Heart right ventricle (tissue), 16 donors: ENCODE measurements at regions of chr6 and their contacts with region 1.

Region 1: DNA sequence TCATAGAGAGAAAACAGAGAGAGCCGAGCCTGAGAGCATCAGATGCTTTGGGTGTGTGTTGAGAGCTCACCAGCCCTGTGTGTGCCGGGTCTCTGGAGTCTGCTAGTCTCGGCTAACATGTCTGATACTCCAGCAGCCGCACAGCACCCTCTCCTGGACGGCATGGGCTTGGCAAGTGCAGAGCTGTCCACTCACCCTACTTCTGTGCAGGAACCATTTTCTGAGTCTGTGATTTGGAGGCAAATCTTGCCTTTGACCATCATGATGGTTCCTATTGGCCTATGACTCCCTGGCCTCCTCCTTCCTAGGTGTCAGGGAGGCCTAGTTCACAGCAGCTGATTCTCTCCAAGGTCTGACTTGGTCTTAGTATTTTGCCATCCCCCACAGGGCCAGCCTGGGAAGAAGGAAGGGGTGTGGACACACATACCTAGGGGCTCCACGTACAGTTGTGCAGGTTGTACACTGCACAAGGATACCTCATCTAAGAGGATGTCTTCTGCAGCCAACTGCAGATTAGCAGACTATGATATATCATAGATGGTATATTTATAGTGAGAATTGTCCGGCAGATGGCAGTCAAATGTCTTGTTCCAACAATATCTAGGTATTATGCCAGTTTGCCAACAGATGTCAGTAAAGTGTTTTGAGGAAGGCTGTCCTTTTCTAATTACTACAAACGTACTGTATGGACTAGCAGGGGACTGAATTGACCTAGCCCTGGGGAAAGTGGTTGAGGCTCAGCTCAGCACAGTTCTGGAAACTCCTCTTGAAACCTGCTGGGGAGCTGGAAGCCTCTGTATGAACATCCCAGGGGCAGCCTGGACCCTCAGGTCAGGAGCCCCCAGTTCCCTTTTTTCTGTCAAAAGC is 13.0 kb downstream of the FGD2 start:
- DNase-seq: peak; percentile 89 to 90
- ATAC-seq: peak; percentile 92 to 98 (median 96)
- H3K4me3 ChIP-seq: no peak overlapping the region
- H3K27ac ChIP-seq: peak overlapping the region in 7 of 10 donors; percentile 10 to 47 (median 38)
- H3K4me1 ChIP-seq: peaks cover 2 to 23% (median 8%) of the 10 kb centered on the region in 9 donors
- H3K27me3 ChIP-seq: no peaks in the 10 kb centered on the region
- CTCF ChIP-seq: peak; percentile 63 to 85 (median 83)

Region 2: GRCh38 chr6:36765594-36766398 is 252.6 kb before region 1 on chr6:
- intact Hi-C with region 1: loop called in 9 of 10 experiments (anchors 1 to 5 kb)
- DNase-seq: peak; percentile 80 to 83
- ATAC-seq: peak; percentile 53 to 86 (median 80)
- H3K4me3 ChIP-seq: no peak overlapping the region
- H3K27ac ChIP-seq: no peak overlapping the region
- H3K4me1 ChIP-seq: peaks cover 12 to 45% (median 39%) of the 10 kb centered on the region in 9 donors
- H3K27me3 ChIP-seq: no peaks in the 10 kb centered on the region
- CTCF ChIP-seq: peak; percentile 67 to 96 (median 92)

Region 3: DNA sequence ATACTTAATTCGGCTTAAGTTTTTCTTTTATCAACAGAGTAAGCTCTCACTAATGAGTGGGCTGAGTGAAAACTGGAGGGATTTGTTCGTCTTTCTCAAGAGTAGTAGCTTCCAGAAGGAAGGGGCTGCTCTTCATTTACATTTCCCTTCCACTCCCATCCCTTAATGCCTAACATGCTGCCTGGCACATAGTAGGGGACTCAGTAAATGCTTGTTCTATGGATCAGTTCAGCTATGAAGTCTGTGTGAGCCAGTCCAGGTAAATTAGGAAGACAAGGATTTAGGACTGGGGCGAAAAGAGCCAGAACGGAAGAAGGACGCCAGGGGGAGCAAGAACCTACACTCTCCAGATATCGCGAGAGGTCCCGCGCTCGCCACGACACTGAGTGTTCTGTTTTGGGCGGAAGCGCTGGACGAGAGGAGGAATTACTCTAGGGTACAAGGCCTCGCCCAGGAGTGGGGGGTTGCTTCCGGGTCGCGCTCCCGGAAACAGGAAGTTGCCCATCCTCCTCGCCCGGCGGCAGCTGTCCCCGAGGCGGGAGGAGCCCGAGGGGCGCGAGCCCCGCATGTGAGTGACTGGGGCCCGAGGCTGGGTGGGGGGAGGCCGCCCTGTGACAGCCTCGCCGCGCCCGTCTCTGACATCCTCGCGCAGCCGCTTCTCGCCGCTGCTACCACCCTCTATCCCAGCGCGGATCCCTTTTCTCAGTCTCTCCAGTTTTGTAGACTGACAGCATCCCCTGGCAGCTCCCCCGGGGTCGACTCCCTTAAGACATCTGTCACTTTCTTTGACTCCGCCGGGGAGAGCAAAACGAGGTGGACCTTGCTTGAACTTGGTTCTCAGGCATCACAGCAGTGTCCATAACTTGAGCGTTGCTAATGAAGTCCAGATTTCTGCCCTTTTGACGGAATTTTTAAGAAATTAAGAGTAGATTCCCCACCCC is 132.7 kb before region 1 on chr6 and contains the start of gene C6orf89:
- intact Hi-C with region 1: loop called in 8 of 10 experiments (anchors 1 to 10 kb)
- DNase-seq: peak; percentile 96 to 98
- ATAC-seq: peak; percentile 99 to 100 (median 100)
- H3K4me3 ChIP-seq: peak within 1 kb of the TSS; percentile 18 to 95 (median 74)
- H3K27ac ChIP-seq: peak within 1 kb of the TSS; percentile 76 to 95 (median 92)
- H3K4me1 ChIP-seq: peaks cover 8 to 46% (median 30%) of the 10 kb centered on the region in 9 donors
- H3K27me3 ChIP-seq: no peaks in the 10 kb centered on the region
- CTCF ChIP-seq: peak; percentile 78 to 96 (median 85)
- total RNA-seq, gene C6orf89: 64.6 to 104 (median 74.7) TPM

Region 4: GRCh38 chr6:36897609-36898008 is 120.8 kb before region 1 on chr6:
- intact Hi-C with region 1: loop called in 1 of 10 experiments (anchors 10 kb)
- DNase-seq: no peak
- ATAC-seq: peak in 2 of 8 donors; percentile 63 to 68
- H3K4me3 ChIP-seq: no peak overlapping the region
- H3K27ac ChIP-seq: no peak overlapping the region
- H3K4me1 ChIP-seq: peaks cover 0 to 6% (median 0%) of the 10 kb centered on the region in 9 donors
- H3K27me3 ChIP-seq: no peaks in the 10 kb centered on the region
- CTCF ChIP-seq: peak in 8 of 9 donors; percentile 4 to 49 (median 28)

Region 5: GRCh38 chr6:37083243-37084138 is 65.1 kb after region 1 on chr6:
- intact Hi-C with region 1: no loop called
- DNase-seq: peak; percentile 63 to 74
- ATAC-seq: peak; percentile 87 to 97 (median 90)
- H3K4me3 ChIP-seq: no peak overlapping the region
- H3K27ac ChIP-seq: peak overlapping the region in 5 of 10 donors; percentile 19 to 82 (median 58)
- H3K4me1 ChIP-seq: peaks cover 0 to 25% (median 13%) of the 10 kb centered on the region in 9 donors
- H3K27me3 ChIP-seq: no peaks in the 10 kb centered on the region
- CTCF ChIP-seq: no peak